Activated T-helper 1 cell treated with anti-CD3 and anti-CD28 coated beads, Interleukin-12 subunit alpha, Interleukin-12 subunit beta, Interleukin-2, Interleukin-4 antibody, amounts not matched to agents 30 ng/mL and 10 ng/mL and 1 ng/mL, durations not matched to agents 14 hours and 24 hours and 36 hours (primary cell): ENCODE measurements at regions of chr6 and their contacts with region 1.

Region 1: GRCh38 chr6:15621203-15622044 is 41.4 kb downstream of the DTNBP1 start:
- DNase-seq: no peak
- H3K4me3 Mint-ChIP-seq: no peak overlapping the region
- H3K27ac Mint-ChIP-seq: peak overlapping the region; percentile 16
- H3K4me1 Mint-ChIP-seq: peaks cover 27% of the 10 kb centered on the region
- H3K27me3 Mint-ChIP-seq: peaks cover 2% of the 10 kb centered on the region

Region 2: DNA sequence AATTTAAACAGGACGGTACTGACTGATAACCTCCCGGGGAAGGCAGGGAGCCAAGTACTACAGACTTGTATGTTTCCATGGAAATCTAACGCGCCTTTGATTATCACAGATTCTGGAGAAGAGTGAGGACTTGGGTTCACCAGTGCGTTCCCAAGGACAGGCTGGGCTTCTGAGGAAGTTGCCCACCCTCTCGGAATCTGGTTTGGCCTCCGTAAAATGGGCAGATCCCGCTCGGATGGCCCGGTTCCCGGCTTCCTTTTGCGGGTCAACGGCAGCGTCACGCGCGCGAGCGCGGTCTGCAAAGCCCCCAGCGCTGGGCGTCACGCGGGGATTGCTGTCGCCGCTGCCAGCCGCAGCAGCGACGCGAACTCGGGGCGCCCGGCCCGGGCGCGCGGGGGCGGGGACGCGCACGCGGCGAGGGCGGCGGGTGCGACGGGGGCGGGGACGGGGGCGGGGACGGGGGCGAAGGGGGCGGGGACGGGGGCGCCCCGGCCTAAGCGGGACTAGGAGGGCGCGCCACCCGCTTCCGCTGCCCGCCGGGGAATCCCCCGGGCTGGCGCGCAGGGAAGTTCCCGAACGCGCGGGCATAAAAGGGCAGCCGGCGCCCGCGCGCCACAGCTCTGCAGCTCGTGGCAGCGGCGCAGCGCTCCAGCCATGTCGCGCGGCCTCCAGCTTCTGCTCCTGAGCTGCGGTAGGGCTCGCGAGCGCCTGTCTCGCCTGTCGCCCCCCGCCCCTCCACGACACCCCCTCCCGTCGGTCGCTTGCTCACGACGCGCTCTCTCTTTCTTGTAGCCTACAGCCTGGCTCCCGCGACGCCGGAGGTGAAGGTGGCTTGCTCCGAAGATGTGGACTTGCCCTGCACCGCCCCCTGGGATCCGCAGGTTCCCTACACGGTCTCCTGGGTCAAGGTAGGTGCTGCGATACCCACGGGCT is 1504.0 kb before region 1 on chr6 and contains the start of gene CD83:
- intact Hi-C with region 1: loop called (anchors 10 kb)
- DNase-seq: peak; percentile 82
- H3K4me3 Mint-ChIP-seq: peak within 1 kb of the TSS; percentile 96
- H3K27ac Mint-ChIP-seq: peak within 1 kb of the TSS; percentile 83
- H3K4me1 Mint-ChIP-seq: peaks cover 46% of the 10 kb centered on the region
- H3K27me3 Mint-ChIP-seq: peaks cover 36% of the 10 kb centered on the region
- total RNA-seq, gene CD83: 101 and 107 TPM in 2 replicates

Region 3: DNA sequence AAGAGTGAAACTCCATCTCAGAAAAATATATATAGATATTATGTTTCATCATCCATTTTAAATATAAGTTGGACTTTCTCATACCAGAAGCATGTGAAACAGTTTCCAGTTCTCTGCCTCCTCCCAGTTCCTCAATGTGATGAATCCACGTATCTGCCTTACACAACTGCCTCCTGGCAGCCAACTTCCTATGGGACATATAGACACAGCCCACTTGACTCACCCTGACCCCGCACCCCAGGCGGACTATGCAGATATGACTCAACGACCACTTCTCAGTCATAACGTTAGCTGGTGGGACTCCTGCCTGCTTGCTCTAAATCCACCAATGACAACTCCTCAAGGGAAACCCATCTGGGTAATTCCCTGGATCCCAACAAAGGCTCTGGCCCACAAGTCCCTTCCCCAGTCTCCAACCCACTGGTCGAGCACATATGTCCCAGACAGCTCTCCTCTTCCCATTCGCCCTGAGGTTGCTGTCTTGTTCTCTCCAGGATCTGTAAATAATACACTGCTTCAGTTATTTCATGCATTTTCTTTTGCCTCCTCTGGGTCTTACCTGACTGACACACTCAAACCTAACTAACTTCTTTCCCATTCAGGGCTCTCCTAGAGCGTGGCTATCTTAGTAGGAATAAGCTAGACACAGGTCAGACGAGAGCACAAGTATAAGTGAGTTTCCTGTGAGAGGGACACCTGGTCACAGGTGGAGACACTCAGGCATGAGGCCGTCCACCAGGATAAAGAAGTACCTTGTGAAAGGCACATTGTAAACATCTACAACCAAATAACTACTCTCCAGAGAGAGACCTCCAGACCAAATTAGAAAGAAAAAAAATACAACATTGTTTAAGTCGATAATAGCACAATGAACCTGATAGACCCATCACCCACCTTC is 955.3 kb before region 1 on chr6:
- intact Hi-C with region 1: loop called (anchors 10 kb)
- DNase-seq: no peak
- H3K4me3 Mint-ChIP-seq: no peak overlapping the region
- H3K27ac Mint-ChIP-seq: no peak overlapping the region
- H3K4me1 Mint-ChIP-seq: peaks cover 28% of the 10 kb centered on the region
- H3K27me3 Mint-ChIP-seq: peaks cover 32% of the 10 kb centered on the region

Region 4: GRCh38 chr6:15491255-15491985 is 130.0 kb before region 1 on chr6:
- intact Hi-C with region 1: loop called (anchors 1 kb)
- DNase-seq: peak; percentile 55
- H3K4me3 Mint-ChIP-seq: no peak overlapping the region
- H3K27ac Mint-ChIP-seq: peak overlapping the region; percentile 77
- H3K4me1 Mint-ChIP-seq: peaks cover 31% of the 10 kb centered on the region
- H3K27me3 Mint-ChIP-seq: peaks cover 1% of the 10 kb centered on the region

Region 5: DNA sequence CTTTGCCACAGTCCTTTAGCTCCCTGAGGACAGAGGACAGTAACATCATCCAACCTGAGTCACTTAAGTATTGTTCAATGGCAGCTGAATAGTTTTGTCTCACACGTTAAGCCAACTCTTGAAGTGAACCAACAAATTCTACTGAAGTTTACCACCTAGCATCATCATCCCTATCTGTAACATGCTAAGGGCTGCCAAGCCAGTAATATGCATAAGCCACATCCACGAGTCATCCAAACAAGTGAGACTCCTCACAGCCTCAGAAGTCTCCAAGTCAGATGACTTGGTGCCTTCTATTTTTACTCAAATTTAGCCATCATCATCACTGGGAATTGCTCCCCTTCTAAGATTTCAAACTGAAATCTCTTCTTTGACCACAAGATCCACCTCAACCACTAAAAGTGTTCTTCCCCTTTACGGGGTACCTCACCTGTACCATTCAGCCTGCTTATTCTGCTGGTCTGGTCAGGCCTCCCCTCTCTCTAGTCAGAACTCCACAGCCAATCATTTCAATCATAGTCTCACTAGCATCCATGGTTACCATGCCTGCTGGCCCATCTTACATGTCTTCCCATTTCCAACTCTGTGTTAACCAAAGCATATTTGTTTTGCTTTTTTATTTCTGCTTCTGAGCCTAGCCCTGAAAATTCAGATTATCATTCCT is 32.3 kb before region 1 on chr6:
- intact Hi-C with region 1: loop called (anchors 1 kb)
- DNase-seq: no peak
- H3K4me3 Mint-ChIP-seq: no peak overlapping the region
- H3K27ac Mint-ChIP-seq: peak overlapping the region; percentile 33
- H3K4me1 Mint-ChIP-seq: peaks cover 24% of the 10 kb centered on the region
- H3K27me3 Mint-ChIP-seq: no peaks in the 10 kb centered on the region

Region 6: GRCh38 chr6:15662326-15663129 is 41.1 kb after region 1 on chr6 and contains the start of gene DTNBP1:
- intact Hi-C with region 1: no loop called
- DNase-seq: peak; percentile 85
- H3K4me3 Mint-ChIP-seq: peak within 1 kb of the TSS; percentile 81
- H3K27ac Mint-ChIP-seq: peak within 1 kb of the TSS; percentile 77
- H3K4me1 Mint-ChIP-seq: peaks cover 24% of the 10 kb centered on the region
- H3K27me3 Mint-ChIP-seq: peaks cover 14% of the 10 kb centered on the region
- total RNA-seq, gene DTNBP1: 17.2 and 19.2 TPM in 2 replicates